HepG2 (cell line): ENCODE measurements at regions of chr2 and their contacts with region 1.

Region 1: GRCh38 chr2:88187038-88187676 is 17.0 kb downstream of the THNSL2 start:
- DNase-seq: peak; percentile 70
- ATAC-seq: peak; percentile 89
- H3K4me3 ChIP-seq: no peak overlapping the region
- H3K27ac ChIP-seq: no peak overlapping the region
- H3K4me1 ChIP-seq: peaks cover 14% of the 10 kb centered on the region
- H3K27me3 ChIP-seq: peaks cover 0 to 8% of the 10 kb centered on the region in 2 experiments; a peak in 1 of 5 replicates
- CTCF ChIP-seq: peak; percentile 99
- EP300 ChIP-seq: no peak
- POLR2A ChIP-seq: no peak
- RAD21 ChIP-seq: peak; percentile 92

Region 2: DNA sequence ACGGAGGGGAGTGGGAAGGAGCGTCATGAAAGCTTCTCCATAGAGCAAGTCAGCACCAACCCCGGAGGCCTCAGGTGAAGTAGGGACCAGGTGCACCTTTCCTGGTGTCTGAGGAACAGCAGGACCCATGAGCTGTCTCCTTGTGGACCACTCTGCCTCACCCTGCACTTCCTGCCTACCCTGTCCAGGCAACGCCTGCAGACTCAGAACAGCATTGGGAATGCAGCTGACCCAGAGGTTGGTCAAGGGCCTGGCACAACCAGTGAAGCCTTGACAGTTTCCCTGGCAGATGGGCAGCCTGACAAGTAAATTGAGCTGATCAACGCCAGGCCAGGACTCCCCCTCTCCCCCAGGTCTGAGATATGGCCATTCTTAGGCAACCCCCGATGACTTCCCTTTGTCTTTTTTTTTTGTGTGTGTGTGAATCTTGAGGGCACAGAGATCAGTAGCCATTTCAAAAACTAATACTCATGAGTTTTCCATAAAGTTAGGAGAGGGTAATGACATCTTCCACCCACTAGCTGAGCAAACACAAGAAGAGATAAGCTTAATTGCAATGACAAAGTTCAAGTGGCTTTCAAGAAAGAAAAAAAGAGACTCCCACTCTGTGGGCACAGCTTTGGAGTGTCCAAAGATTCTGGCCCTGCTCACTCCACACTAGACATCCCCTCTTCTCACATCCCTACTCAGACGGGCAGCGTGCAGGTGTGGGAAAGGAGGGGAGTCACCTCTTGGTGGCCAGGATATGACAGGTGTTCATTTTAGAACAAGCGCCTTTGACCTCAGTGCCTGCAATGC is 55.8 kb before region 1 on chr2:
- CTCF ChIA-PET with region 1: no interaction called
- POLR2A ChIA-PET with region 1: no interaction called
- in situ Hi-C with region 1: no loop called
- intact Hi-C with region 1: no loop called
- DNase-seq: peak; percentile 75
- ATAC-seq: peak; percentile 22
- H3K4me3 ChIP-seq: peak overlapping the region in 1 of 3 experiments; percentile 18; a peak in 1 of 6 replicates
- H3K27ac ChIP-seq: peak overlapping the region; percentile 75
- H3K4me1 ChIP-seq: peaks cover 89% of the 10 kb centered on the region
- H3K27me3 ChIP-seq: no peaks in the 10 kb centered on the region; a peak in 1 of 5 replicates
- CTCF ChIP-seq: no peak
- EP300 ChIP-seq: peak in 1 of 2 experiments; percentile 95; a peak in 2 of 4 replicates
- POLR2A ChIP-seq: no peak
- RAD21 ChIP-seq: no peak

Region 3: GRCh38 chr2:88212251-88212790 is 25.2 kb after region 1 on chr2:
- CTCF ChIA-PET with region 1: interaction called, 24 read pairs
- POLR2A ChIA-PET with region 1: interaction called, 20 read pairs
- in situ Hi-C with region 1: no loop called
- intact Hi-C with region 1: loop called (anchors 1 kb)
- DNase-seq: peak; percentile 90
- ATAC-seq: peak; percentile 80
- H3K4me3 ChIP-seq: peak overlapping the region in 1 of 3 experiments; percentile 47; a peak in 2 of 6 replicates
- H3K27ac ChIP-seq: peak overlapping the region; percentile 88
- H3K4me1 ChIP-seq: peaks cover 63% of the 10 kb centered on the region
- H3K27me3 ChIP-seq: no peaks in the 10 kb centered on the region
- CTCF ChIP-seq: peak; percentile 69
- EP300 ChIP-seq: peak in 1 of 2 experiments; percentile 92; a peak in 2 of 4 replicates
- POLR2A ChIP-seq: no peak
- RAD21 ChIP-seq: peak; percentile 79

Region 4: DNA sequence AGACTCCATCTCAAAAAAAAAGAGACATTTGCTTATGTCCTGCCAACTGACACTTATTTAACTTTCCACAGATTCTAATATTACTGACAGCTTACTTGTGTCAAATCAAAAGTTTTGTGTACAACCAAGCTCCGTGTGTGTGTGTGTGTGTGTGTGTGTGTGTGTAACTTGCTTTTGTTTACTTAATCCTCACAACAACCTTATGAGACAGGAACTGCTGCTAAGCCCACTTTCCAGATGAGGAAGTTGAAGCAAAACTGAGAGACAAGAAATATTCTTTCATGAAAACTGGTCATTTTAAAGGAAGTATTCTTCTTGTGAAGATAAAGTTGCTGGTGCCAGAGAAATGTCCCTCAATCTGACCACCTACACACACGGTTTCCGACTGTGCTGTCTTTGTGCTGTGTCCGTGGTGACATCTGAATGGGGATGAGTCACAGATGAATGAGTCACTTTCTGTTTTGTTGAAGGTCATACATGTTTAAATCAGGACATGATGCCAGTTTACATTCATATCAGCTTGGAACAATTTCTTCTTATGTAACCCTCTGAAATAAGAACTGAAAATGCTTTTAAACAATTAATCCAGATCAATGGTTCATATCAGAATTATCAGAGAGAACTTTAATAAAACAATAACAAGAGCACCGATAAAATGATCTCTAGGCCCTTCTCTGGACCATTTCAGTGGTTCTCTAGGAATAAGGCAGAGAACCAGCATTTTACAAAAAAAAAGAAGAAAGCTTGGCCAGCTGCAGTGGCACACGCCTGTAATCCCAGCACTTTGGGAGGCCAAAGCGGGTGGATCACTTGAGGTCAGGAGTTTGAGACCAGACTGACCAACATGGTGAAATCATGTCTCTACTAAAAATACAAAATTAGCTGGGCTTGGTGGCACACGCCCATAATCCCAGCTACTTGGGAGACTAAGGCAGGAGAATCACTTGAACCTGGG is 78.5 kb after region 1 on chr2:
- CTCF ChIA-PET with region 1: no interaction called
- POLR2A ChIA-PET with region 1: no interaction called
- in situ Hi-C with region 1: no loop called
- intact Hi-C with region 1: loop called (anchors 1 kb)
- DNase-seq: peak; percentile 86
- ATAC-seq: peak; percentile 93
- H3K4me3 ChIP-seq: no peak overlapping the region
- H3K27ac ChIP-seq: no peak overlapping the region
- H3K4me1 ChIP-seq: peaks cover 29% of the 10 kb centered on the region
- H3K27me3 ChIP-seq: peaks cover 0 to 8% of the 10 kb centered on the region in 2 experiments; a peak in 2 of 5 replicates
- CTCF ChIP-seq: no peak
- EP300 ChIP-seq: peak in 1 of 2 experiments; percentile 53; a peak in 1 of 4 replicates
- POLR2A ChIP-seq: no peak
- RAD21 ChIP-seq: no peak

Region 5: DNA sequence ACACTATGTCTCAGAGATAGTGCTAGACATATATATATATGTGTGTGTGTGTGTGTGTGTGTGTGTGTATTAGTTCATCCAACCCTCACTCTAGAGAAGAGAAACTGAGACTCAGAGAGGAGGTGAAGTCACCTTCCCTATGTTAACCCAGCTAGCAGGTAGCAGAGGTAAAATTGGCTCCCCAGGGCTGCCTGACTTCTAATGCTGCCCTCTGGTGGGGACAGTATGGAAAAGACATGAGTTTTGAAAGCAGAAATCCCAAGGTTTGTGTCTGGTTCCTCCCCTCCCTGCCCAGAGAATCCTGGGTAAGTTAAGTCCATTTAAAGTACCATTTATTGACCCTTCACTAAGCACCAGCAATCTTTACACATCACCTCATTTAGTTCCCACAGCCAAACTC is 120.7 kb after region 1 on chr2:
- CTCF ChIA-PET with region 1: interaction called, 111 read pairs
- POLR2A ChIA-PET with region 1: no interaction called
- in situ Hi-C with region 1: loop called (anchors 5 kb)
- intact Hi-C with region 1: loop called (anchors 1 kb)
- DNase-seq: peak; percentile 65
- ATAC-seq: peak; percentile 71
- H3K4me3 ChIP-seq: no peak overlapping the region
- H3K27ac ChIP-seq: no peak overlapping the region
- H3K4me1 ChIP-seq: no peaks in the 10 kb centered on the region
- H3K27me3 ChIP-seq: no peaks in the 10 kb centered on the region; a peak in 1 of 5 replicates
- CTCF ChIP-seq: peak; percentile 80
- EP300 ChIP-seq: no peak
- POLR2A ChIP-seq: no peak
- RAD21 ChIP-seq: peak; percentile 79

Region 6: GRCh38 chr2:88451811-88452565 is 264.8 kb after region 1 on chr2:
- CTCF ChIA-PET with region 1: interaction called, 33 read pairs
- POLR2A ChIA-PET with region 1: no interaction called
- in situ Hi-C with region 1: loop called (anchors 5 kb)
- intact Hi-C with region 1: loop called (anchors 1 kb)
- DNase-seq: no peak
- ATAC-seq: peak; percentile 15; the same call in 1 of the 3 replicates
- H3K4me3 ChIP-seq: no peak overlapping the region; a peak in 1 of 6 replicates
- H3K27ac ChIP-seq: no peak overlapping the region
- H3K4me1 ChIP-seq: no peaks in the 10 kb centered on the region
- H3K27me3 ChIP-seq: peaks cover 0 to 29% of the 10 kb centered on the region in 2 experiments; a peak in 3 of 5 replicates
- CTCF ChIP-seq: no peak
- EP300 ChIP-seq: no peak
- POLR2A ChIP-seq: no peak
- RAD21 ChIP-seq: no peak

Region 7: GRCh38 chr2:88458633-88459032 is 271.5 kb after region 1 on chr2:
- CTCF ChIA-PET with region 1: interaction called, 33 read pairs
- POLR2A ChIA-PET with region 1: no interaction called
- in situ Hi-C with region 1: loop called (anchors 5 kb)
- intact Hi-C with region 1: loop called (anchors 1 kb)
- DNase-seq: no peak
- ATAC-seq: no peak
- H3K4me3 ChIP-seq: no peak overlapping the region
- H3K27ac ChIP-seq: no peak overlapping the region
- H3K4me1 ChIP-seq: no peaks in the 10 kb centered on the region
- H3K27me3 ChIP-seq: peaks cover 0 to 14% of the 10 kb centered on the region in 2 experiments; a peak in 2 of 5 replicates
- CTCF ChIP-seq: no peak
- EP300 ChIP-seq: no peak
- POLR2A ChIP-seq: no peak
- RAD21 ChIP-seq: no peak

Region 8: DNA sequence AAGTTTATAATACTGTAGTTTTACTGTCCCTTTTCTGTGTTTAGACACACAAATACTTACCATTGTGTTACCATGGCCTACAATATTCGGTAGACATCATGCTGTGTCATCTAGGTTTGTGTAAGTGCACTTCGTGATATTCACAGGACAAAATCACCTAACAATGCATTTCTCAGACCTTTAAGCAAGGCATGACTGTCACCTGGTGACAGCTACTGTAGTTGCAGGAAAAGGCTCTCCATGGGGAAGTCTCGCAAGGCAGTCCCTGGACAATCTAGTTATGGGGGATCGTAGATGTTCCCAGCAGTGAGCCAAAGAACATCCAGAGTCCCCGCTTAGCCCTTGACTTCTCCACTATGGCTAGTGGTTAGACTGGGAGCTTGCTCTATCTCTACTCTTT is 367.0 kb after region 1 on chr2:
- CTCF ChIA-PET with region 1: interaction called, 3 read pairs
- POLR2A ChIA-PET with region 1: no interaction called
- in situ Hi-C with region 1: no loop called
- intact Hi-C with region 1: loop called (anchors 2 kb)
- DNase-seq: no peak
- ATAC-seq: peak; percentile 71
- H3K4me3 ChIP-seq: no peak overlapping the region
- H3K27ac ChIP-seq: no peak overlapping the region
- H3K4me1 ChIP-seq: no peaks in the 10 kb centered on the region
- H3K27me3 ChIP-seq: peaks cover 0 to 5% of the 10 kb centered on the region in 2 experiments; a peak in 2 of 5 replicates
- CTCF ChIP-seq: peak; percentile 69
- EP300 ChIP-seq: no peak
- POLR2A ChIP-seq: no peak
- RAD21 ChIP-seq: 0 out of 2 replicates have a peak, but pooled peaks have one; percentile 40